Activated naive CD4-positive, alpha-beta T cell treated with anti-CD3 and anti-CD28 coated beads, Interleukin-2, amount 10 ng/mL, durations not matched to agents 7 days and 5 days (primary cell): ENCODE measurements at regions of chr15 and their contacts with region 1.

Region 1: DNA sequence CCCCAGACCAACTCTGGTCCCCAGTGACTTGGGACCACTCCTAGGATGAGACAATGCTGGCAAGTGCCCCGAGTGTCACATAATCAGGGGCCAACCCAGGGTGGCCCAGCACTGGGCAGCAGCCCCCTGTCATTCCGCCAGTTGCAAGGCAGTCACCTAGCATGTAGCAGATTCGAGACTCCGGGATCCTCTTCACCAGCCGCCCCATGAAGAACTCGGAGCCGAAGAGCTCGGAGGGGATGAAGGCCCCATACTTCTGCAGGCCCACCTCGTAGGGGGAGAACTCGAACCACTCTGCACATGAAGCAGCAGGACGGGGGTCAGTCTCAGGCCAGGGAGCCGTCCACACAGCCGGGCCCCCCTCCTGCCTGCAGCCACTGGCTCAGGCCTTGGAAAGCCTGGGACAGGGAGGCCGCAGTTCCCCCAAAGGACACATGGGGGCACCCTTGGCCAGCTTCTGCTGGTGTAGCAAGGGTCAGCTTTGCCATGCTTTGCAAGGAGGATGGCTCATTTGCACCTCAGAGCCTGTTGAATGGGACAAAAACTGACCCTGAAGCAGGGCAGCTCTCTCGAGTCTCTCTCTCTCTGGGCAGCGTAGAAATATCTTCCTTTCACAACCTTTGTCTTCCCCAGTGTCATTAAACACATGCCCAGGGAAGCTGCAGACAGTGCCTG is 17.0 kb upstream of the EHD4 start:
- DNase-seq: peak; percentile 90
- H3K4me3 Mint-ChIP-seq: no peak overlapping the region
- H3K27ac Mint-ChIP-seq: no peak overlapping the region
- H3K4me1 Mint-ChIP-seq: no peaks in the 10 kb centered on the region
- H3K27me3 Mint-ChIP-seq: peaks cover 16% of the 10 kb centered on the region

Region 2: GRCh38 chr15:42031198-42031915 is 42.0 kb after region 1 on chr15:
- CTCF ChIA-PET with region 1: no interaction called
- DNase-seq: no peak
- H3K4me3 Mint-ChIP-seq: no peak overlapping the region
- H3K27ac Mint-ChIP-seq: no peak overlapping the region
- H3K4me1 Mint-ChIP-seq: peaks cover 9% of the 10 kb centered on the region
- H3K27me3 Mint-ChIP-seq: peaks cover 34% of the 10 kb centered on the region

Region 3: GRCh38 chr15:42056934-42057779 is 67.8 kb after region 1 on chr15:
- CTCF ChIA-PET with region 1: interaction called, 106 read pairs
- DNase-seq: peak; percentile 62
- H3K4me3 Mint-ChIP-seq: peak overlapping the region; percentile 50
- H3K27ac Mint-ChIP-seq: no peak overlapping the region
- H3K4me1 Mint-ChIP-seq: peaks cover 14% of the 10 kb centered on the region
- H3K27me3 Mint-ChIP-seq: peaks cover 56% of the 10 kb centered on the region

Region 4: DNA sequence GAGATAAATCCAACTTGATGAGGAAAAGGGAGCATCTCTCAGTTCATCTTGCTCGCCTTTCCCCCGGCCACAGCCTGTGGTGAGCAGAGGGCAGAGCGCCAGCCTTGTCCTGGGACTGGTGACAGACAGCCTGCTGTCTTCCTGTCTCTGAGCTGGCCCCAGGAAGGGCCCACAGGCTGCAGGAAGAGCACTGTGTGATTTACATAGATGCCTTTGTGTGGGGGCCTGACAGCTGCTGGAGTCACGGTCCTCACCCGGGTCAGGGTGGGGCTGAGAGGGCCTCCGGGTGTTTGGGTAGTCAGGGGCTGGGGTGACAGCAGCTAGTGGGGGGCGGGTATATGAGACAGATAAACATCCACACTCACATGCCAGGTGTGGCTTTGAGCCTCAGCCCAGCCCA is 75.6 kb after region 1 on chr15:
- CTCF ChIA-PET with region 1: interaction called, 21 read pairs
- DNase-seq: no peak
- H3K4me3 Mint-ChIP-seq: no peak overlapping the region
- H3K27ac Mint-ChIP-seq: no peak overlapping the region
- H3K4me1 Mint-ChIP-seq: peaks cover 5% of the 10 kb centered on the region
- H3K27me3 Mint-ChIP-seq: peaks cover 48% of the 10 kb centered on the region

Region 5: DNA sequence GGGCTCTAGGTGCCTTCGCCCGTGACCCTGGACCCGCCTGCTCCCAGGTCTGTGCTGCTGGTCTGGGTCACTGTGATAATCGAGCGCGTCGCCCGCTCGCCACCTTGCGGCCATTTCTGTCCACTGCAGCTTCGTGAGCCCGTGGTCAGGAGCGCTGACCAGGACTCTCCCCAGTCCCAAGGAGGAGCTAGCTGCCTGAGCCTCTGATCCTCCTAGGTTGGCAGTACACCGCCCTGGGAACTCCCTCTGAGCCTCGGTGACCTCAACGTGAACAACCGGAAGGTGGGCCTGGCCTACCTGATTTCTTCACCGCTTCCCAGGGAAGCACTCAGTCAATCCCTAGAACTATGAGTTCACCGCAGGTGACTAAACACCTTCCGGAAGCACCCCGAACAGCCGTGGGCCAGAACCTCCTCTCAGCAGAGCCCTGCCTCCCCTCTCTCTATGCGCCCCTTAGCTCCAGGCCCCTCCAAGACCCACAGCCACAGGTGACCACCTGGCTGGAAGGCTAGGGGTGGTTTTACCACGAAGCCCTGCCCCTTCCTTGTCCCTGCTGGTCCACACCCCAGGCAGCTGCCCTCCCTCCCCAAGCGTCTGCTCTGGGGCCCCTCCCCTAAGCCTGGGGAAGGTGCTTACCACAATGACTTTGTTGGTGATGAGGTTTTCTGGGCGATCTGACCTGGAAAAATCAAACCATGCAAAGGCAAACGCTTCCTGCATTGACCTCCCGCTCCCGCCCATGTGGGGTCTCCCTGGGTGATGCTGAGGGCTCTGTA is 95.3 kb after region 1 on chr15:
- CTCF ChIA-PET with region 1: interaction called, 19 read pairs
- DNase-seq: peak; percentile 55
- H3K4me3 Mint-ChIP-seq: no peak overlapping the region
- H3K27ac Mint-ChIP-seq: no peak overlapping the region
- H3K4me1 Mint-ChIP-seq: peaks cover 7% of the 10 kb centered on the region
- H3K27me3 Mint-ChIP-seq: peaks cover 54% of the 10 kb centered on the region

Region 6: DNA sequence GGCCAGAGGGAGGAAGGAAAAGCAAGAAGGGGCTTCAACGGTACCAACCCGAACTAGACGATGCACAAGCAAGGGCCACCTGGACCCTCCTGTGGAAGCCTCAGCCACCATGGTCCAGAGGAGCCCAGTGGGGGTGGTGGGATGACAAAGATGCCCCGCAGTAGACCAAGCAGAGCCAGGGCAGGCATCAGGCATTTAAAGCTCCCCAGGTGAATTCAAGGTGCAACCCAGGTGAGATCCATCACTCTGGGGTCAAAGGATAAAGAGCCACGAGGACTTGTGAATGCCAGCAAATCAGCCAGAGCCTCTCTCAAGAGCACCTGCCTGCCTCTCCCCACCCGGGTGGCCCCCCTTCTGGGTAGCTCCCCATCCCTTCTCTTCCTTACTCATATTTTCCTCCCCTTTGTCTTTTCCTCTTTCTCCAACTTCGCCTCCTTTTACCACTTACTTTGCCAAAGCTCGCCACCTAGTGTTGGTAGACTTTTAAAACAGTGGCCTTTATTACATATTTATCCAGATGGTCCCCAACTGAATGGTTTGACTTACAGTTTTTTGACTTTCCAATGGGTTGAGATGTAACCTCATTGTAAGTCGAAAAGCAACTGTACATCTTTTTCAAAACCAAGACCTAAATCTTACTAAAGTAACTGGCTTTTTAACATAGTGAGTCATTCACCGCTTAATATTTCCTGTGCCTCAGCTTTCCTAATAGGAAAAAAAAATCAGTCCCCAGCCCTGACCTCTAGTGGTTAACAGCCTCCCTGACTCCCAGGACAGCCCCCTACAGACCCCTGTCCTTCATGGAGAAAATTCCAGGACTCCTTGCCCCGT is 148.2 kb after region 1 on chr15:
- CTCF ChIA-PET with region 1: interaction called, 22 read pairs
- DNase-seq: peak; percentile 22
- H3K4me3 Mint-ChIP-seq: no peak overlapping the region
- H3K27ac Mint-ChIP-seq: no peak overlapping the region
- H3K4me1 Mint-ChIP-seq: peaks cover 3% of the 10 kb centered on the region
- H3K27me3 Mint-ChIP-seq: peaks cover 37% of the 10 kb centered on the region

Region 7: GRCh38 chr15:42267286-42267685 is 277.9 kb after region 1 on chr15:
- CTCF ChIA-PET with region 1: no interaction called
- DNase-seq: no peak
- H3K4me3 Mint-ChIP-seq: no peak overlapping the region
- H3K27ac Mint-ChIP-seq: no peak overlapping the region
- H3K4me1 Mint-ChIP-seq: peaks cover 38% of the 10 kb centered on the region
- H3K27me3 Mint-ChIP-seq: no peaks in the 10 kb centered on the region